ENCODE measurements at regions of chr12 and their contacts with region 1.

Region 1: DNA sequence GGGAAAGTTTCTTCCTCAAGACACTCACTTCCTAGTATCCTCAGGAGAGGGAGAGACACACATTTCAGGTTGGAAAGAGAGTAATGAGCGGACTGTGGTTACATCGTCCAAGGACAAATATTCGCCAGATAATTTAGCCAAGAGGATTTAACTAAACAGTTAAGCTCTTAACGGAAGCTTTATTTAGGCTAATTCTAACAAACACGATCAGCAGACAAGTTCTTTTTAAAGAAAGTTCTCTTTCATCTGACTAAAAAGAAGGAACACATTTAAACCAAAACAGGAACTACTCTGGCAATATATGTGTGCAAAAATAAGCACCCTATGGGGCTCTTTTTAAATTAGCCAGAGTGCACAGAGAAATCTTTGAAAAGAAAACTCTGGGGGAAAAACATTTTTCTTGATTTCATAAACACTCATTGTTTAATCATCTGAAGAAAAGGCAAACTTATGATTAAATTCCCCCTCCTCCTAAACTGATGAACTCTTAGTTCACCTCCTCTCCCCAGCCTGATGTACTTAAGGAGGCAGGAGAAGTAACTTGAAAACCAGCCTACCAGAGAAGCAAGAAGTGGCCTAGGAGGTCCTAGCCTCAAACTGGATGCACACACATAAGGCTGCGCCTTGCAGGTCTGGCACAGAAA is 13.3 kb upstream of the BTG1 start:
- DNase-seq: no peak
- ATAC-seq: peak in 1 of 4 donors; percentile 59
- H3K4me3 ChIP-seq: no peak overlapping the region
- H3K27ac ChIP-seq: no peak overlapping the region
- H3K4me1 ChIP-seq: no peaks in the 10 kb centered on the region
- H3K27me3 ChIP-seq: no peaks in the 10 kb centered on the region
- CTCF ChIP-seq: no peak

Region 2: GRCh38 chr12:91866566-91866965 is 292.4 kb before region 1 on chr12:
- intact Hi-C with region 1: no loop called
- DNase-seq: no peak
- ATAC-seq: no peak
- H3K4me3 ChIP-seq: no peak overlapping the region
- H3K27ac ChIP-seq: no peak overlapping the region
- H3K4me1 ChIP-seq: no peaks in the 10 kb centered on the region
- H3K27me3 ChIP-seq: no peaks in the 10 kb centered on the region
- CTCF ChIP-seq: no peak

Region 3: GRCh38 chr12:91978143-91978542 is 180.8 kb before region 1 on chr12:
- intact Hi-C with region 1: no loop called
- DNase-seq: no peak
- ATAC-seq: no peak
- H3K4me3 ChIP-seq: no peak overlapping the region
- H3K27ac ChIP-seq: no peak overlapping the region
- H3K4me1 ChIP-seq: peaks cover 0 to 11% (median 0%) of the 10 kb centered on the region in 3 donors
- H3K27me3 ChIP-seq: no peaks in the 10 kb centered on the region
- CTCF ChIP-seq: no peak

Region 4: GRCh38 chr12:92570056-92570753 is 411.3 kb after region 1 on chr12:
- intact Hi-C with region 1: loop called in 1 of 3 experiments (anchors 10 kb)
- DNase-seq: peak in 3 of 6 donors; percentile 62 to 74 (median 64)
- ATAC-seq: peak; percentile 76 to 90 (median 88)
- H3K4me3 ChIP-seq: no peak overlapping the region
- H3K27ac ChIP-seq: peak overlapping the region in 2 of 4 donors; percentile 32 to 64
- H3K4me1 ChIP-seq: peaks cover 0 to 29% (median 14%) of the 10 kb centered on the region in 3 donors
- H3K27me3 ChIP-seq: no peaks in the 10 kb centered on the region
- CTCF ChIP-seq: peak; percentile 24 to 73 (median 62)

Measured in pancreas (tissue), 10 donors.